ENCODE measurements at regions of chr5 and their contacts with region 1.

Region 1: DNA sequence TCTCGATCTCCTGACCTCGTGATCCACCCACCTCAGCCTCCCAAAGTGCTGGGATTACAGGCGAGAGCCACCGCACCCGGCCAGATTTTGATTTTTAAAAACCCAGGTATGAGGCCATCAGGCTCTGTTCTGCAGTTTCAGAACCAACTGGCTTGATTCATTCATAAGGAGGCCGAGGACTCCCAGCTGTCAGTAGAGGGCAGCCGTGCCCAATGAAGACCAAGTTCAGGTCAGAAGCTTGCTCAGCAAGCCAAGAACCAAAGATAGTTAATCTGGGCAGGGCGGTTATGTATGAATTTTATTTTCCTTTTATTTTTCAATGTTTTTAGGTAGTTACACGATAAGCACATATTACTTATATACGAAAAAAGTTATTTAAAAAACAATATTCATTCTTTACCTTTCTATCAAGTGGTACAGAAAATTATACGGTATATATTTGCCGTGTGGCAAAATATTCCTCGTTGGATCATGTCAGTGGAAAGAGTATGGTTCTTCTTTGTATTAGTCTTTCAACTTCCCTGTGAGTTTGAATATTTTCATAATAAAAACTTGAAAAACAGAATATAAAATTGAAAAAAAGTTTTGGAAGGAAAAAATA is 18.0 kb downstream of the MGAT1 start:
- DNase-seq: peak; percentile 77 to 86
- ATAC-seq: peak; percentile 70 to 83 (median 76)
- H3K4me3 ChIP-seq: no peak overlapping the region
- H3K27ac ChIP-seq: peak overlapping the region in 5 of 10 donors; percentile 54 to 87 (median 71)
- H3K4me1 ChIP-seq: peaks cover 25 to 53% (median 46%) of the 10 kb centered on the region in 9 donors
- H3K27me3 ChIP-seq: no peaks in the 10 kb centered on the region
- CTCF ChIP-seq: peak; percentile 49 to 90 (median 79)

Region 2: GRCh38 chr5:180848878-180849277 is 64.3 kb after region 1 on chr5:
- intact Hi-C with region 1: loop called in 1 of 10 experiments (anchors 2 kb)
- DNase-seq: no peak
- ATAC-seq: no peak
- H3K4me3 ChIP-seq: no peak overlapping the region
- H3K27ac ChIP-seq: no peak overlapping the region
- H3K4me1 ChIP-seq: peaks cover 0 to 20% (median 9%) of the 10 kb centered on the region in 9 donors
- H3K27me3 ChIP-seq: no peaks in the 10 kb centered on the region
- CTCF ChIP-seq: no peak

Region 3: GRCh38 chr5:180868960-180869359 is 84.4 kb after region 1 on chr5:
- intact Hi-C with region 1: loop called in 7 of 10 experiments (anchors 2 to 5 kb)
- DNase-seq: peak; percentile 78 to 84
- ATAC-seq: peak in 7 of 8 donors; percentile 55 to 90 (median 80)
- H3K4me3 ChIP-seq: no peak overlapping the region
- H3K27ac ChIP-seq: no peak overlapping the region
- H3K4me1 ChIP-seq: peaks cover 0 to 14% (median 4%) of the 10 kb centered on the region in 9 donors
- H3K27me3 ChIP-seq: peaks cover 0 to 11% (median 0%) of the 10 kb centered on the region in 7 donors
- CTCF ChIP-seq: peak; percentile 57 to 81 (median 77)

Region 4: GRCh38 chr5:181159286-181159829 is 374.8 kb after region 1 on chr5:
- intact Hi-C with region 1: loop called in 8 of 10 experiments (anchors 1 to 10 kb)
- DNase-seq: peak; percentile 82 to 88
- ATAC-seq: peak; percentile 85 to 96 (median 90)
- H3K4me3 ChIP-seq: no peak overlapping the region
- H3K27ac ChIP-seq: no peak overlapping the region
- H3K4me1 ChIP-seq: peaks cover 0 to 15% (median 5%) of the 10 kb centered on the region in 9 donors
- H3K27me3 ChIP-seq: peaks cover 0 to 41% (median 6%) of the 10 kb centered on the region in 7 donors
- CTCF ChIP-seq: peak; percentile 69 to 93 (median 87)